Posterior vena cava (tissue), 2 donors: ENCODE measurements at regions of chr2 and their contacts with region 1.

Region 1: DNA sequence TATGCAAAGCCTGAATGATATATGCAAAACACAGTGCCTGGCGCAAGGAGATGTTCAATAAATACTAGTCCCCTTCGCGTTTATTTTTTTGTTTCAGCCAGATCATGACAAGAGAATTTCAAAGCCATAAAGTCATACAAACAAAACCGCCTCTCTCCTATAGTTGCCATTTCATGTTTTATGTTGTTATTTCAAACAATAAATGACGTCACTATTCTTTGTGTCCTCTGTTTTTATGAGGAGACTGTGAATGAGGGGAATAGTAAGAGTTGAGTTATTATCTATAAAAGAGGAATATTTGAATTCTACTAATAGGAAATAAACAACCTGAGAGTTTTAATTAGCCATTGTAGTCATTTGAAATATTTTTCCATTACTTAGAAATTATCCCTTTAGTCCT is 464.5 kb downstream of the THSD7B start:
- DNase-seq: no peak

Region 2: GRCh38 chr2:136117909-136118818 is 1111.7 kb before region 1 on chr2 and contains the start of gene CXCR4:
- intact Hi-C with region 1: no loop called
- DNase-seq: peak; percentile 93
- total RNA-seq, gene CXCR4: 7.8 to 8.3 TPM

Region 3: DNA sequence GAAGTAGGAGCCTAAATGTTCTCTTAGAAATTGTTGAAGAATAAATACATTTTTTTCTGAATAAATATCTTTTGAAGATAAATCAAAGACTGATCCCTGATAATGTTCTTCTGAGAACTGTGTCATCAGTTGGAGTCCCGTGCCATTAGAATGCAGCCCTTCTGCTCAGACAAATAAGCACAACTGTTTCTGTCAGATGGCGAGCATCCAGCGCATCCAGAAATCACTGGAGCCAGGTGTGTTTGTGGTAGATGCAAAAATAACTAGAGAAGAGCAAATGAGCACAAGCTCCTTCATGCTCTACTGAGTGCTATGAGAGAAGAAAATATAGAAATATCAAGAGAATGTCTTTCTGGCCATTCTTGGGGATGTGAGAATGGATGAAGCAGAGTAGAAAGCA is 109.2 kb after region 1 on chr2:
- intact Hi-C with region 1: no loop called
- DNase-seq: no peak

Region 4: DNA sequence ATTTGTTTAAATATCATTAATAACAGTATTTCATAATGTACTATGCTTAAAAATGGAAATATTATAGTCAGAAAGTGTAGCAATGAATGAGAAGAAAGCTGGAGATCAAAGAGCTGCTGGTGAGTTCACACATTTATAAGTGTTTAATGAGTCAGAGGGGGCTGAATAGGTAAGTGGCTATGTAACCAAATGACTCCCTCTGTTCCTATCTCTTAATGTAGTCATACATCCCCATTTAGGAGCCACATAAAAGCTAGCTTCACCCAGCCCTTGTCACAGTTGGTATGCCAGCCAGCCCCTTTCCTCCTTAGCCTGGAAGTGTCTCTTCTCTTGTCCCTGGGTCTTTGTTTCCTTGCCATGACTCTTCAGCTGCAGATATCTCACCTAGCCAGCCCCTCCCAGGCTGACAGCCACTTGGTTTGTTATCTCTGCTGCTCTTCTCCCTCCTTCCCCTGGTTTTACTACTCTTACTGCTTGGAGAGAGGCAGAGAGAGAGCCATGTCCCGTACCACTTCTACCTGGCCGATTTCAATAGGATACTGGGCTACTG is 295.9 kb after region 1 on chr2:
- intact Hi-C with region 1: no loop called
- DNase-seq: no peak

Region 5: GRCh38 chr2:138581909-138582308 is 1352.1 kb after region 1 on chr2:
- intact Hi-C with region 1: loop called in 1 of 2 experiments (anchors 5 kb)
- DNase-seq: no peak